AG04450 (cell line): ENCODE measurements at regions of chr2 and their contacts with region 1.

Region 1: GRCh38 chr2:208128136-208128535 is 1.5 kb downstream of the CRYGC start:
- DNase-seq: no peak
- H3K4me3 ChIP-seq: no peak overlapping the region
- H3K27ac ChIP-seq: no peak overlapping the region
- H3K27me3 ChIP-seq: peaks cover 7% of the 10 kb centered on the region
- CTCF ChIP-seq: no peak

Region 2: DNA sequence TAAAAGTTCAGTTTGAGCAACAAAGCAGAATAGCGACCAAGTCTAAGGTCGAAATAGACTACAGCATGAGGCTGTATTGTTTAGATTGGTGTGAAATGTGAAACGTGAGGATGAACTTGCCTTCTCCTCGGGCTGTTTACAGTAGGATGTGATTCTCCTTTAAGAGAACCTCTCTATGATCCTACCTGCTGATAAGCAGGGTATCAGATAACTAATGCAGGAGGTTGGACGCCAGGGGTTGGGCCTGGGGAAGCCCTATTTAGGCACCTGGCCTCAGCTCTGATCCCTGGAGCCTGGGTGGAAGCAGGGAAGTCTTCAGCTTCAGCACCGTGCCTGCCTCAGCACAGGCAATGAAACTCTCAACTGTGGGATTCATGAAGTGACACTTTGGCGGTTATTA is 15.2 kb before region 1 on chr2:
- CTCF ChIA-PET with region 1: no interaction called
- POLR2A ChIA-PET with region 1: no interaction called
- DNase-seq: no peak
- H3K4me3 ChIP-seq: no peak overlapping the region
- H3K27ac ChIP-seq: no peak overlapping the region
- H3K27me3 ChIP-seq: peaks cover 23% of the 10 kb centered on the region
- CTCF ChIP-seq: no peak

Region 3: DNA sequence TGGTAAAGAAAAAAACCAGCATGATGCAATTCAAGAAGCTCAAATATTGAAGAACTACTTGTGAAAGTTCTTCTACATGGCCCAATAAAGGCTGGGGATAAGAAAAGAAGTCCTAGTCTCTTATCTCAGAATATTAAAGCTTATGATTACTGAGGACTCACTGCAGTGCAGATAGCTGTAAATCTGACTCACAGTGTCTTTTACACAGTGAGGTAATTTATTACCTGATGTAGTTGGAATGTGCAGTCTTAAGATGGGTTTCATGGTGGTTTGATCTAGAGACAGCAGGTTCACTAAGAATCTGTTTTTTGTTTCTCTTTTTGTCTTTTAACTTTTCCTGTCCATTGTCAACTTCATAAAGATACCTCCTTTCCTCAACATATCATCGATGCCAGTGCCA is 811.7 kb after region 1 on chr2:
- CTCF ChIA-PET with region 1: interaction called, 14 read pairs
- POLR2A ChIA-PET with region 1: no interaction called
- DNase-seq: no peak
- H3K4me3 ChIP-seq: no peak overlapping the region
- H3K27ac ChIP-seq: no peak overlapping the region
- H3K27me3 ChIP-seq: no peaks in the 10 kb centered on the region
- CTCF ChIP-seq: no peak